Activated naive CD4-positive, alpha-beta T cell treated with anti-CD3 and anti-CD28 coated beads for 36 hours (primary cell): ENCODE measurements at regions of chr17 and their contacts with region 1.

Region 1: DNA sequence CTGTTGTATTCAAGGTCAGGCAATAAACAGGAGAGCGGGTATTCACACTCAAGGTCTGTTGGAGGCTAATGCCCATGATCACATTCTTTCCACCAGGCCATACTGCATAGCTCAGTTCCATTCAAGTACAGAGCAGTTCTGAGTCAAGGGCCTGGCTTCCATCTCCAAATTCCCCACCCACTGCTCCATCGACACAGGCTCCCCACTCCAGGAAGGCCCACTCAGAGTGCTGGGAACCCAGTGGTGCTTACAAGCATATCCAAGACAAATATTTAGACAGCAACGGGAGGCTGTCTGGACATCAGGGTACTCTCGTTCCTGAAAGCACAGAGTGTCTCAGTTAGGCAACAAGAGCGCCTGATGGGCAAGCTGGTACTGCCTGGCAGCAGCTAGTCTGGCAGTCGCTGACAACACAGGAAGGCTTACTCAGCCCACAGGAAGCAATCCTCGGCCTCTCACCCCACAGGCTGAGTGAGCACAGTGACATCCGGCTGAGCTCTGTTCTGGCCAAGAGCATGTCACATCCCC is 40.9 kb downstream of the RFFL start:
- DNase-seq: peak; percentile 91
- H3K4me3 Mint-ChIP-seq: peak overlapping the region; percentile 81
- H3K27ac Mint-ChIP-seq: peak overlapping the region; percentile 98
- H3K4me1 Mint-ChIP-seq: peaks cover 35% of the 10 kb centered on the region
- H3K27me3 Mint-ChIP-seq: no peaks in the 10 kb centered on the region

Region 2: DNA sequence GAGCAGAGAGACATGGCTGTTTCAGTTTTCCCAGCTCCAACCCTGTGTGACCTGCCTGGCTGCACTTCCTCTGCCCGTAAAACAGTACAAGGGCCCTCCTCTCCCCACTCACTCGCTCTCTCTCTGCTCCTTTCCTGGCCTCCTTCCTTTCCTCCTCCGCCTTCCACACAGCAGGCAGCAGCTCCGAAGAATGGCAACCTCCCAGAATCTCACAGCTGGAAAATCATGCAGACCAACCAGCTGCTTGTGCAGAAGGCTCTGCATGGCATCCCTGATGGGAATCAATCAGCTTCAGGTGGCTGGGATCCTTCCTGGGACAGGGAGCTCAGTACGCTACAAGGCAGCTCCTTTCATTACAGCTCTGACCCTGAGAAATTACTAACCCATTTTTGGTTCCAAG is 415.8 kb before region 1 on chr17:
- CTCF ChIA-PET with region 1: no interaction called
- intact Hi-C with region 1: no loop called
- DNase-seq: no peak
- H3K4me3 Mint-ChIP-seq: no peak overlapping the region
- H3K27ac Mint-ChIP-seq: no peak overlapping the region
- H3K4me1 Mint-ChIP-seq: no peaks in the 10 kb centered on the region
- H3K27me3 Mint-ChIP-seq: peaks cover 24% of the 10 kb centered on the region

Region 3: DNA sequence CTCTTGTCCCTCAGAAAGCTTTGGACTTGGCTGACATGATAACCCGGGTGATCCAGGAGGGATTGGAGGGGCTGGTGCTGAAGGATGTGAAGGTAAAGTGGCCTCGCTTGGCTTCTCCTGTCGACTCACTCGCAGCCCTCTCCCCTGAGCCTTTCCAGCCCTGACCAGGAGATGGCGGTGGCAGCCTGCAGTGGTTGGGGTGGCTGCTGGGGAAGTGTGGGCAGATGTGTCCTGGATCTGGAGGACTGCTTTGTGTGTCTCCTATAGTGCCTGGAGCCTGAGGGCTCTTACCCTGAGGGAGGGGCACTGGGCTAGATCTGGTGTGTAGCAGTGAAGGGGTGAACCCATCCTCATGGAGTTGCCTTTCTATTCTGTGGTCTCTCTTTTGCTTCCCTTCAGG is 24.4 kb before region 1 on chr17:
- CTCF ChIA-PET with region 1: interaction called, 3 read pairs
- intact Hi-C with region 1: loop called (anchors 1 kb)
- DNase-seq: peak; percentile 88
- H3K4me3 Mint-ChIP-seq: no peak overlapping the region
- H3K27ac Mint-ChIP-seq: peak overlapping the region; percentile 83
- H3K4me1 Mint-ChIP-seq: peaks cover 6% of the 10 kb centered on the region
- H3K27me3 Mint-ChIP-seq: no peaks in the 10 kb centered on the region

Region 4: GRCh38 chr17:35041390-35041789 is 18.8 kb after region 1 on chr17:
- CTCF ChIA-PET with region 1: interaction called, 10 read pairs
- intact Hi-C with region 1: loop called (anchors 1 kb)
- DNase-seq: no peak
- H3K4me3 Mint-ChIP-seq: no peak overlapping the region
- H3K27ac Mint-ChIP-seq: no peak overlapping the region
- H3K4me1 Mint-ChIP-seq: peaks cover 42% of the 10 kb centered on the region
- H3K27me3 Mint-ChIP-seq: no peaks in the 10 kb centered on the region